Posterior vena cava (tissue), 2 donors: ENCODE measurements at regions of chr5 and their contacts with region 1.

Region 1: DNA sequence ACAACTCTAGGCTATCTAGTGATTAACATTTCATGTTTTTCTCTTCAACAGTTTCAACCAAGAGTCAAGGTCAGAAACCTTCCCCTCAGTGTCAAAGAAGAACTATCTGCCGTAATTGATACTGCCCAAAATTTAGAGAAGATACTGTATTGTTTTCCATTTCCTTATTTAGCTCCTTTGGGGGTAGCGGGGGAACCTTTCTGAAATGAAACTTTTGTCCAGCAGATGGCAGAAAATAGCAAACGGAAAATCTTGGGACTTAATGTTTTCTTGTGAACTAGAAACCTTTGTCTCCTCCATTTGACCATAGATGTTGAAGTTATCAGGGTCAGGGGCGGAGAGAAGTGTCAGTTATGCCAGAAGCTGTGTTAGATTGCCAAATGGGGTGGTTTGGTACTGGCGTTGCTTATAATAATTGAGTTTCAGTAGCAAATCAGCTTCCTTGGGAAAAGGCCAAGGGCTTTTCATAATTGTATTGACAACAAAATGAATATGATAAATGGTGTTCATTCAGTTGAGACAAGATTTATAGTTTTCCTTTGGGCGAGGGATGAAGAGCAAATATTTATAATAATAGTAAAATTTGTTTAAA is 101.7 kb upstream of the TLX3 start:
- DNase-seq: no peak

Region 2: DNA sequence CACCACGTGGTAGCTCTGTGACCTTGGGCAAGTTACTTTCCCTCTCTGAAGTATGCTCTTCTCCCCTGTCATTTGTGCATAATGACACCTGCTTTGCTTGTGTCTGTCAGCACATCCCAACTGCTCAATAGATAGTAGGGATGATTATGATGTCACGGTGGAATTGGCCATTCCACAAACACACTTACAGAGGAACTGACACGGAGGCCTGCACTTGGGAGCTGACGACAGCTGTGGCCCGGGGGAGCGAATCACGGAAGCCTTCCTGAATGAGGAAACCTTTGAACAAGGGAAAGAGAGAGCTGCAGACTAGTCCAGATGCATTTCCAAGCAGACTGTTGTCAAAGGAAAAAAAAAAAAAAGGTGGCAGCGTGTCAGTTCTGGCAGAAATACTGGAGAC is 122.7 kb after region 1 on chr5:
- intact Hi-C with region 1: loop called (anchors 5 to 10 kb)
- DNase-seq: no peak

Region 3: DNA sequence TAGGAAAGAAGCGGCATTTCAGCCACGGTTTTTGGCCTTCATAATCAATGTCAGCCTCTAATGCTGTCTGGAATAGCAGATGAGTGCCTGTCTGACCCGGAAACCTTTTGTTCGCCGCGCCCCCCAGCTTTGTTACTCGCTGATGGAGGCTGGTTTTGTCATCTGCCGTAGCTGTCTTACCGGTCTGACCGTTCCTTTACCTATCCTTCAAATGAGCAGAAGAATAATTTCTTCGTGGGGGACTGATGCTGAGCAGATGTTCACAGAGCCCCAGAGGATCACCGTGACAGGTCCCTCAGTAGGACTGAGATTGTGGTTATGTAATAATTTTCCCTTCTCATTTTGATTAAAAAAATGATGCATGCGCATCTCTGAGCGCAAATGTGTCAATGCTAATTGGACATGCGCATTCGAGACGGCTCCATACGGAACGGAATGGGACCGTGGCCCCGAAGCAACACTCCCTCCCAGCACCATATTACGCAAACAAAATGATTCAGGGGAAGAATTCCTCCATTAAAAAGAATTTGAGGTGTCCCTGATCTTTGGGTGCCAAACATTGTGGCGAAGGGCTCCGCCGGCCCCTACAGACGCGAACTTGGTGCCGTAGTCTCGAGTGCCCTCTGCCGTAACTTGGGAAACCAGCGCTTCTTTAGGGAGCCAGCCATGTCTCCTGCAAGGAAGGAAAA is 129.3 kb after region 1 on chr5:
- intact Hi-C with region 1: loop called (anchors 5 to 10 kb)
- DNase-seq: no peak

Region 4: GRCh38 chr5:171946000-171946774 is 738.8 kb after region 1 on chr5:
- intact Hi-C with region 1: no loop called
- DNase-seq: no peak